Sigmoid colon (tissue), 7 donors: ENCODE measurements at regions of chr17 and their contacts with region 1.

Region 1: GRCh38 chr17:75331671-75332070 is 42.4 kb upstream of the SLC25A19 start:
- DNase-seq: no peak
- H3K4me3 ChIP-seq: no peak overlapping the region
- H3K27ac ChIP-seq: no peak overlapping the region
- H3K4me1 ChIP-seq: peaks cover 0 to 7% (median 1%) of the 10 kb centered on the region in 4 donors
- H3K27me3 ChIP-seq: no peaks in the 10 kb centered on the region
- CTCF ChIP-seq: no peak
- EP300 ChIP-seq: no peak
- POLR2A ChIP-seq: no peak

Region 2: DNA sequence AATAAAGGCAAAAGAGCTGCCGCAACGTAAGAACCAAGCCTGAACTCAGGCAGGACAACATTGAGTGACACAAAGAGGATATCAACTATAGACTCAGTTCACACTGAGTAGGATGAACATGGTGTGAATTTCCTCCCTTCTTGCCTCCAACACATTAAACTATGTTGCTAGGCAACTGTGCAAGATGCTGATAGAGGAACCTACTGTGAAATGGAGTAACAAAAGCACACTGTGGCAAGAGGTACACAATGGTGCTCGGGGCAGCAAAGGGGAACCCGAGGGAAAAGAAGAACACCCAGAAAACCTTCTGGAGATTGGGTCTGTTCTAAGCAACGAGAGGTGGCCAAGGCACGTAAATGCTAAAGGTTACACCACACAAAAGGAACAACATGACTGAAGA is 39.7 kb after region 1 on chr17:
- intact Hi-C with region 1: loop called (anchors 5 kb)
- DNase-seq: no peak
- H3K4me3 ChIP-seq: no peak overlapping the region
- H3K27ac ChIP-seq: peak overlapping the region in 2 of 4 donors; percentile 59 to 75
- H3K4me1 ChIP-seq: peaks cover 0 to 53% (median 31%) of the 10 kb centered on the region in 4 donors
- H3K27me3 ChIP-seq: no peaks in the 10 kb centered on the region
- CTCF ChIP-seq: no peak
- EP300 ChIP-seq: no peak
- POLR2A ChIP-seq: no peak

Region 3: DNA sequence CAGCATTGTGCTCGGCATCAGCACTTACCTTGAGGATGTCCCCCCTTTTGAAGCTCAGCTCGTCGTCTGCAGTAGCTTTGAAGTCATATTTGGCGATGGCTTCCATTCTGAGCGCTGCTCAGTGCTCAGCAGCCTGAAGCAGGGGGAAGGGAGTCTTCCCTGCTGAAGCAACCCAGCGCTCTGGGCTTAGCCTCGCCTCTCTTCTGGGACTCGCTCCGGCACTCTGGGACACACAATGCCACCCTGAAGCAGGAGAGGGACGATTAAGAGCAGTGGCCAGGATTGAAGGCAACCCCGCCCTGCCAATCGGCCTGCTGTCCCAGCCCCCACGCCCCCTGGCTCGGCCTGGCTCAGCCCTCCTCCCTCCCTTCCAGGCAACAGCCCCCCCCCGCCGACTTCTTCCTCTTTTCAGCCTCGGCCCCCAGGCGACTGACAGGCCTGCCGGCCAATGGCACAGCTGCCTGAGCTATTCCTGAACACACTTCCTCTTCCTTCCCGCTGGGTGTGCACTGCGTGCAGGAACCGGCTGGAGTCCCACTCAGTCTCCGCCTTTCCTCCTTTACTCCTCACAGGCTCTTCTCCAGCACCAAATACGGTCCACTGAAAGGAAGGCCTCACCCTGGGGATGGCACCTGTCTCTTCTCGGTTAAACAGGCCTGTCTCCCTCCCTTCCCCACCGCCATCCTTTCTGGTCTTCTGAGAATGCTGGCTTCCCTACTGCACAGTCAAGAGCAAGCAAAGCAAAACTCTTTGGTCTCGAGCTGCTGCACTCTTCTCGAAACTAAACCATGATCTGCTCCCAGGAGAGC is 62.1 kb after region 1 on chr17:
- intact Hi-C with region 1: no loop called
- DNase-seq: peak; percentile 99
- H3K4me3 ChIP-seq: peak overlapping the region; percentile 56 to 69 (median 60)
- H3K27ac ChIP-seq: peak overlapping the region; percentile 84 to 90 (median 89)
- H3K4me1 ChIP-seq: peaks cover 0 to 59% (median 52%) of the 10 kb centered on the region in 4 donors
- H3K27me3 ChIP-seq: no peaks in the 10 kb centered on the region
- CTCF ChIP-seq: peak in 2 of 4 experiments; percentile 14 to 63
- EP300 ChIP-seq: no peak
- POLR2A ChIP-seq: peak; percentile 27 to 39